AG04449 (cell line): ENCODE measurements at regions of chr10 and their contacts with region 1.

Region 1: GRCh38 chr10:100878291-100878910 is 34.4 kb upstream of the SLF2 start:
- DNase-seq: no peak
- H3K4me3 ChIP-seq: no peak overlapping the region
- CTCF ChIP-seq: peak; percentile 83

Region 2: GRCh38 chr10:100481462-100482081 is 396.8 kb before region 1 on chr10:
- CTCF ChIA-PET with region 1: interaction called, 12 read pairs
- POLR2A ChIA-PET with region 1: no interaction called
- DNase-seq: no peak
- H3K4me3 ChIP-seq: peak overlapping the region; percentile 53
- CTCF ChIP-seq: no peak

Region 3: DNA sequence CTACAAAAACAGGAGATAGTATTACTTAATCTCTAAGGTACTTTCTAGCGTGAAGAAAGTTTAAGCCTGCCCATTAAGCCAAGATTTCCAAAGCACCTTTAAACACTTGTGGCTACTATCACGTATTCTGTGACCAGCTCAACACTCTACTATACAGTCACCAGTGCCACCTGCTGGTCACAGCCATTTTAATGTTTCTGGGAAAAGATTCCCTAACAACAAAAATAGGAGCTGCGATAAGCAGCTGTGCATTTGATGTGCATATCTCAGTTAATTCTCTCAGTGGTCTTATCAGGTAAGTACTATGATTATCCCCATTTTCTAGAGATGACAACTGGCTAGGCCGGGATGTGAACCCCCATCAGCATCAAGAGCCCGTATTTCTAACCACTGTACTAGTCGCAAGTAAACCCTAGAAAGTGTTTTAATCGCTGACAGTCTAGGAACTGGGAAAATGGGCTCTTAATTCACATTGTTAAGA is 359.6 kb before region 1 on chr10:
- CTCF ChIA-PET with region 1: interaction called, 114 read pairs
- POLR2A ChIA-PET with region 1: no interaction called
- DNase-seq: no peak
- H3K4me3 ChIP-seq: no peak overlapping the region
- CTCF ChIP-seq: peak; percentile 58

Region 4: GRCh38 chr10:100535715-100536353 is 342.6 kb before region 1 on chr10 and contains the start of gene HIF1AN:
- CTCF ChIA-PET with region 1: interaction called, 50 read pairs
- POLR2A ChIA-PET with region 1: interaction called, 5 read pairs
- DNase-seq: peak; percentile 63
- H3K4me3 ChIP-seq: peak within 1 kb of the TSS; percentile 67
- CTCF ChIP-seq: peak; percentile 95

Region 5: GRCh38 chr10:100568912-100569311 is 309.5 kb before region 1 on chr10:
- CTCF ChIA-PET with region 1: interaction called, 235 read pairs
- POLR2A ChIA-PET with region 1: no interaction called
- DNase-seq: no peak
- H3K4me3 ChIP-seq: no peak overlapping the region
- CTCF ChIP-seq: no peak

Region 6: GRCh38 chr10:100838986-100839385 is 39.4 kb before region 1 on chr10:
- CTCF ChIA-PET with region 1: no interaction called
- POLR2A ChIA-PET with region 1: no interaction called
- DNase-seq: no peak
- H3K4me3 ChIP-seq: no peak overlapping the region
- CTCF ChIP-seq: no peak

Region 7: DNA sequence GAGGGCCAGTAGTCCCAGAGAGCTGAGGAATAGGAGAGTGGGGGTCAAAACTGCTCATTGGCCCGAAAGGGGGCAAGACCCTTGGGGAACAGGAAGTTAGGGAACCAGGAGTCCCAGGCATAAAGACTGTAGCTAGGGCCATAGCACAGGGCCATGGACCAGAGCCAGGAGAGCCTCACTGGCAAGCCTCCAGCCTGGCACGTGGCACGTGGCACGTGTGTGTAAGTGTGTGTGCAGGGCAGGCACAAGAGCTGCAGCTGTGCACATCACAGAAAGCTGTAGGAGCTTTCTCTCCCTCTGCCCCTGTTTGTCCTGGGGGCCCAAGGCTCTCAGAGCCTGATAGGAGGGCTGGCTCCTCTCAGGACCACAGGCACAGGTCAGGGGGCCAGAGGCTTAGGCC is 13.4 kb before region 1 on chr10:
- CTCF ChIA-PET with region 1: interaction called, 32 read pairs
- POLR2A ChIA-PET with region 1: no interaction called
- DNase-seq: no peak
- H3K4me3 ChIP-seq: no peak overlapping the region
- CTCF ChIP-seq: no peak